Activated CD8-positive, alpha-beta T cell treated with anti-CD3 and anti-CD28 coated beads for 36 hours (primary cell): ENCODE measurements at regions of chr11 and their contacts with region 1.

Region 1: DNA sequence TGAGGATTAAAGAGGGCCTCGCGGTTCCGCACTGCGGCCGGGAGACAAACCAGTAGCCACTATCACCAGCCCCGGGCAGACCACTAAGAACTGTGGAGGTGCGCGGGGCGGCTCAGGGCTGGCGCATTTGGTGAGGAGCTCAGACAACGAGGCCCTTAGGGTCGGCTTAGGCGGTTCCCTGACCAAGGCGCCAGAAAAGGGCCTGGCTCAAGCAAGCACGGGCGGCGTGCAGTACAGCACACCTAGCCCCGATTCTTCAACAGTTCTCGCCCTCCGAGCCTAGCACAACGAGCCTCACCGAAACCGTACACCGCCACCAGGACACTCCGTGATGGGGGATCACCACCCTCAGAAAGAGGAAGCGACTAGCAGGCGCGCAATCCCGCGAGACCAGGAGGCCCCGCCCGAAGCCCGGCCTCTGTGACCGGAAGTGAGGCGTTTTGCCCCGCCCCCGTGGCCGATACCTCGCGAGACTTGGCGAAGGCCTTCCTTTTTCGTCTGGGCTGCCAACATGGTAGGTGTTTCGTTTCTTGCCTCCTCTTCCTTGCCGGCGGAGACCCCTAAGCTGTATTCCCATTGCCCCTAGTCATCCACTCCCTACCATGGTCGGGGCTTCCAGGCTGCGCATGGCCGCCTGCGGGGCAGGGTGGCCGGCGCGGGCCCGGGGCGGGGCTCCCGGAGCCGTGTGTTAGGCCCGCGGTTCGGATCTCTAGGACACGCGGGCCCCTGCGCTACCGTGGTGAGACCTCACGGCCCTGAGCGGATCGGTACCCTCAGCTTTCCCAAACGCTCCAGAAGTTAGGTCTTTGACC is at the starts of genes RPL27A and TRIM66:
- DNase-seq: peak; percentile 99
- ATAC-seq: peak; percentile 96
- H3K4me3 Mint-ChIP-seq: peak within 1 kb of the TSS; percentile 93
- H3K27ac Mint-ChIP-seq: peak within 1 kb of the TSS; percentile 97
- H3K4me1 Mint-ChIP-seq: peaks cover 41% of the 10 kb centered on the region
- H3K27me3 Mint-ChIP-seq: no peaks in the 10 kb centered on the region
- CTCF ChIP-seq: no peak
- total RNA-seq, gene RPL27A: 959 to 987 TPM
- total RNA-seq, gene TRIM66: 24.7 to 28.4 TPM

Region 2: DNA sequence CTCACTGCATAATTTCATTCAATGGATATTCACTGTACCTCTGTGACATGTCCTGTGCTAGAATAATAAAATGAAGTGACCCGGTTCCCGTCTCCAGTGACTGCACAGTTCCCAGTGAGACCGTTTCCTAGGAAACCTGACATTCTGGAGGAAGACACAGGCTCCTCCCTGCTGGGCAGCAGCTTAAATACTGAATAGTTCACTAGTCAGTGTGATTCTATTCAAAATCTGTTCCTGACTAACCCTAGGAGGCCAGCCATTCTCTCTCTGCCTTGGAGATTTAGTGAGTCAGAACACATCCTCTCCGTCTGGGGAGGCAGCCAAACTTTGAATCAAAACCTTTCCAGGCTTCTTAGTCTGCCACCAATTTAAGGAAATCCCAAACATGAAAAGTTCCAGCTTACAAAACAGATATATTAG is 11.3 kb before region 1 on chr11:
- CTCF ChIA-PET with region 1: no interaction called
- POLR2A ChIA-PET with region 1: interaction called, 13 read pairs
- intact Hi-C with region 1: no loop called
- DNase-seq: no peak
- ATAC-seq: no peak
- H3K4me3 Mint-ChIP-seq: no peak overlapping the region
- H3K27ac Mint-ChIP-seq: no peak overlapping the region
- H3K4me1 Mint-ChIP-seq: no peaks in the 10 kb centered on the region
- H3K27me3 Mint-ChIP-seq: no peaks in the 10 kb centered on the region
- CTCF ChIP-seq: no peak

Region 3: GRCh38 chr11:8697054-8697453 is 14.5 kb after region 1 on chr11:
- CTCF ChIA-PET with region 1: no interaction called
- POLR2A ChIA-PET with region 1: interaction called, 15 read pairs
- intact Hi-C with region 1: no loop called
- DNase-seq: no peak
- ATAC-seq: no peak
- H3K4me3 Mint-ChIP-seq: no peak overlapping the region
- H3K27ac Mint-ChIP-seq: no peak overlapping the region
- H3K4me1 Mint-ChIP-seq: no peaks in the 10 kb centered on the region
- H3K27me3 Mint-ChIP-seq: no peaks in the 10 kb centered on the region
- CTCF ChIP-seq: no peak